Vagina (tissue), 2 donors: ENCODE measurements at regions of chr11 and their contacts with region 1.

Region 1: DNA sequence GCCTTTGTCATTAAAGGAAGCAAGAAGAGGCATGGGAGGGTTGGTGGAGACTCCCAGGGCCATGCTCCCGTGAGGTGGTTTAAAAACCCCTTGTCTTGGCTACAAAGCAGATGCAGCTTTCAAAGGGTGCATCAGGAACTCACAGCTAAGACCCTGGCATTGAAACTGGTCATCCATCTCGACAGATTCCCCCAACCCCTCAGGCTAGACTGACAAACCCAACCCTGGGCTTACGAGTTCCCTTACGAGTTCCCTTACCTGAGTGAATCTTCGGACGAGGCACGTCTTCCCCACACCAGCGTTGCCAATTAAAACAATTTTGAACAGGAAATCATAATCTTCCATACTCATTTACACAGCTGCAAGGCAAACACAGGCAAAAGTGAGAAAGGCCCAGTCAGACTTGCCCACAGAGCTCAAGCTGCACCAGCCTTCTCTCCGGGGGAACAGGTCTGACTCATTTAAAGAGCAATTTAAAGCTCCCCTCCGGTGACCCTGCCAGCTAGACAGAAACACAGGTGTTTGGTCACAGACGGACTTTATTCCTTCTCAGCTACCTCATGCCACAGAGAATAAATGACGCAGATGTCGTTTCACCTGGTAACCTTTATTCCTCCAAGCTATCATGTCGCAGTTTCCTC is 74.6 kb downstream of the RAB30 start:
- DNase-seq: no peak
- H3K4me3 ChIP-seq: no peak overlapping the region
- H3K27ac ChIP-seq: no peak overlapping the region
- H3K4me1 ChIP-seq: peaks cover 49% of the 10 kb centered on the region
- H3K27me3 ChIP-seq: no peaks in the 10 kb centered on the region
- CTCF ChIP-seq: no peak
- POLR2A ChIP-seq: no peak

Region 2: GRCh38 chr11:82711648-82712047 is 285.4 kb before region 1 on chr11:
- intact Hi-C with region 1: no loop called
- DNase-seq: no peak
- H3K4me3 ChIP-seq: no peak overlapping the region
- H3K27ac ChIP-seq: no peak overlapping the region
- H3K4me1 ChIP-seq: no peaks in the 10 kb centered on the region
- H3K27me3 ChIP-seq: no peaks in the 10 kb centered on the region
- CTCF ChIP-seq: no peak
- POLR2A ChIP-seq: no peak

Region 3: DNA sequence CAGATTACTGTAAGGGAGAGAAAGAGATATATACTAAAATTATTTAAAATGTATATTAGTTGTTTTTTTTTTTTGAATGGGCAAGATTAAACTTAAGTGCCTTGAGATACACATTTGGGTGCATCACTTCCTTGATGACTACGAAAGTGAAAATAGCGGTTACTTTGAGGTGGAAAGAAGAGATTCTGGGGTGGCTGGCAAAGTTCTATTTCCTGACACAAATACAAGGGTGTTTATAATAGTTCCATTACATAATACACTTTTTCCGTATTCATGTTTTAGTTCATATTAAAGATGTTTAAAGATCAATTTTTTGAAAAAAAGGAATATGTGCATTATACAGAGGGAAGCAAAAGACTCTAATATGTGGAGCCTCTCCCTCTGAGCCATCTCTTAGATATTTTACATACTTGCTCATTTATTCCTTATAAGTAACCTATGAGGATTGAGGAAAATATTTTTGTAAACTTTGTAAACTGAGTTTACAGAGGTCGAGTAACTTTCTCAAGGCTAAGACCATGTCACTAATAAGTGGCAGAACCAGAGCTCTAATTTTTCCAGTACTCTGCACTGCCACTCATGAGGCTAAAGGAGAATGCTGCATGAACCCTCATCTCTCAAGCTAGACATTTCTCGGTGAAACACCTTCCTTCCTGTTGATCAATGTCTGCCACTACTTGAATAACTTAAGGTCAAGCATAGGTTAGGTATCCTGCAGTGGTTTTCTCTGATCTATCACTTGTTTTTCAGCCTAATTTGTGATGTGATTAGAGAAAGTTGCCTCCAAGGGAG is 36.9 kb before region 1 on chr11:
- intact Hi-C with region 1: no loop called
- DNase-seq: no peak
- H3K4me3 ChIP-seq: no peak overlapping the region
- H3K27ac ChIP-seq: no peak overlapping the region
- H3K4me1 ChIP-seq: no peaks in the 10 kb centered on the region
- H3K27me3 ChIP-seq: no peaks in the 10 kb centered on the region
- CTCF ChIP-seq: no peak
- POLR2A ChIP-seq: no peak

Region 4: DNA sequence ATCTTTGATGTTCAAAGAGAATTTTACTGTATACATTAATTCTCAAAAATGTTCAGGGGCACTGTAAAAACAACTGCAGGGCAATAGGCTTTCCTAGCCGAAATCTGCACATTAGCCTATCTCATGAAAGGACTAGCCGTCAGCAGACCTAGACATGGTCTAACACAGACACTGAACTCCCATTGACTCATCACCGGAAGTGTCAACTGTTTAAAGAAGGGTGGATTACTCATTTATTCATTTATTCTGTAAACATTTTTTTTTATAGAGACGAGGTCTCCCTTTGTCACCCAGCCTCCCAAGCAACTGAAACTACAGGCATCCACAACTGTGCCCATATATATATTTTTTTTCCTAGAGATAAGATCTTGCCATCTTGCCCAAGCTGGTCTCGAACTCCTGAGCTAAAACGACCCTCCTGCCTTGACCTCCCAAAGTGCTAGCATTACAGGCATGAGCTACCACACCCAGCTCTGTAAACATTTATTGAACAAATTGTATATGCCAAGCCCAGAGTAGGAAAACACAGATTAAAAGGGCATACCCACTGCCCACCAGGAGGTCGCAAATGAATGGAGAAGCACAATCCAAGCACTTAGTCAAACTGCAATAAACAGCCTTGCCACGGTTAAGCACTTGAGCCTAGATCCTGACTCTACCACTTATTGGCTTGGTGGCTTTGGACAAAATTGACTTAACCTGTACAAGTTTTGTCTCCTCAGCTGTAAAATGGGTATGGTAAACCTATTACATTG is 48.0 kb after region 1 on chr11:
- intact Hi-C with region 1: loop called (anchors 10 kb)
- DNase-seq: no peak
- H3K4me3 ChIP-seq: no peak overlapping the region
- H3K27ac ChIP-seq: no peak overlapping the region
- H3K4me1 ChIP-seq: peaks cover 40% of the 10 kb centered on the region
- H3K27me3 ChIP-seq: no peaks in the 10 kb centered on the region
- CTCF ChIP-seq: no peak
- POLR2A ChIP-seq: no peak